ENCODE measurements at regions of chr3 and their contacts with region 1.

Region 1: GRCh38 chr3:171277456-171278298 is 182.5 kb downstream of the TNIK start:
- DNase-seq: no peak
- H3K4me3 ChIP-seq: no peak overlapping the region
- H3K4me3 Mint-ChIP-seq: no peak overlapping the region
- H3K27ac ChIP-seq: no peak overlapping the region
- H3K27ac Mint-ChIP-seq: peak overlapping the region in 3 of 7 donors; percentile 3 to 48 (median 23)
- H3K4me1 ChIP-seq: peaks cover 61% of the 10 kb centered on the region
- H3K4me1 Mint-ChIP-seq: peaks cover 38 to 73% (median 56%) of the 10 kb centered on the region in 4 donors
- H3K27me3 ChIP-seq: no peaks in the 10 kb centered on the region
- H3K27me3 Mint-ChIP-seq: no peaks in the 10 kb centered on the region

Region 2: GRCh38 chr3:171187706-171188290 is 89.9 kb before region 1 on chr3:
- CTCF ChIA-PET with region 1: interaction called, 3 read pairs
- POLR2A ChIA-PET with region 1: no interaction called
- intact Hi-C with region 1: loop called (anchors 1 kb)
- DNase-seq: peak; percentile 25 to 37 (median 31)
- H3K4me3 ChIP-seq: no peak overlapping the region
- H3K4me3 Mint-ChIP-seq: no peak overlapping the region
- H3K27ac ChIP-seq: no peak overlapping the region
- H3K27ac Mint-ChIP-seq: no peak overlapping the region
- H3K4me1 ChIP-seq: peaks cover 21% of the 10 kb centered on the region
- H3K4me1 Mint-ChIP-seq: peaks cover 28 to 34% (median 31%) of the 10 kb centered on the region in 4 donors
- H3K27me3 ChIP-seq: no peaks in the 10 kb centered on the region
- H3K27me3 Mint-ChIP-seq: no peaks in the 10 kb centered on the region

Region 3: GRCh38 chr3:171257251-171258203 is 20.1 kb before region 1 on chr3:
- CTCF ChIA-PET with region 1: interaction called, 3 read pairs
- POLR2A ChIA-PET with region 1: interaction called, 6 read pairs
- intact Hi-C with region 1: loop called (anchors 2 kb)
- DNase-seq: peak in 2 of 5 donors; percentile 31 to 33
- H3K4me3 ChIP-seq: peak overlapping the region in 1 of 2 donors; percentile 9
- H3K4me3 Mint-ChIP-seq: peak overlapping the region in 7 of 8 donors; percentile 32 to 87 (median 52)
- H3K27ac ChIP-seq: peak overlapping the region; percentile 68
- H3K27ac Mint-ChIP-seq: peak overlapping the region in 6 of 7 donors; percentile 90 to 97 (median 96)
- H3K4me1 ChIP-seq: peaks cover 99% of the 10 kb centered on the region
- H3K4me1 Mint-ChIP-seq: peaks cover 80 to 97% (median 88%) of the 10 kb centered on the region in 4 donors
- H3K27me3 ChIP-seq: no peaks in the 10 kb centered on the region
- H3K27me3 Mint-ChIP-seq: no peaks in the 10 kb centered on the region

Region 4: DNA sequence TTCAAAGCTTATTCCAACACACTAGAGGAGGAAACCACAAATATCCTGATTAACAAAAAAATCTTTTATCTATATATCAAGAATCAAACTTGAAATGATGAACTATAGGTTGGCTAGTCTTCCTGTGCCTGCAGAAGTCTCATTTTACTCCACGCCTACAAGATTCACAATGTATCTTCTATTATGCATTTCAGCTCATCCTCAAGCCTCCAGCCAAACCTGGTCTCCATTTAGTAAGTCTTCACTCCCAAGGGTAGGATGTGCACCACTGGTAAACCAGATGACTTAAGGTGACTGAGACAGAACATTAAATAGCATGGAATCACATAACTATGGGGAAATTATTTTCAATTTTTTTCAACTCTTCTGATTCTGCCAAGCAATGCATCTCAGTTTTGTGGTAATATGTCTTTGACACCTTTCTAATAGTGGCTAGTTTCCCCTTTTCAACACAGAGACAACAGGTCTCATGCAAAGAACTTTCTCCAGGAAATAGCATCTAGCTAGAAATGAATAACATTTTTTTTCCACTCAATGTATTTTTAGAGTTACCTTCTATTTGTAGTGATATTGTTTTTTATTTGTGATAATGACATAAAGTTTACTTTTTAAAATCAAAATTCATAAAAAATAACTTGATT is 15.6 kb after region 1 on chr3:
- CTCF ChIA-PET with region 1: interaction called, 3 read pairs
- POLR2A ChIA-PET with region 1: no interaction called
- intact Hi-C with region 1: loop called (anchors 2 kb)
- DNase-seq: no peak
- H3K4me3 ChIP-seq: no peak overlapping the region
- H3K4me3 Mint-ChIP-seq: peak overlapping the region in 7 of 8 donors; percentile 18 to 78 (median 64)
- H3K27ac ChIP-seq: no peak overlapping the region
- H3K27ac Mint-ChIP-seq: peak overlapping the region in 6 of 7 donors; percentile 36 to 82 (median 70)
- H3K4me1 ChIP-seq: peaks cover 48% of the 10 kb centered on the region
- H3K4me1 Mint-ChIP-seq: peaks cover 47 to 72% (median 59%) of the 10 kb centered on the region in 4 donors
- H3K27me3 ChIP-seq: no peaks in the 10 kb centered on the region
- H3K27me3 Mint-ChIP-seq: no peaks in the 10 kb centered on the region

Region 5: DNA sequence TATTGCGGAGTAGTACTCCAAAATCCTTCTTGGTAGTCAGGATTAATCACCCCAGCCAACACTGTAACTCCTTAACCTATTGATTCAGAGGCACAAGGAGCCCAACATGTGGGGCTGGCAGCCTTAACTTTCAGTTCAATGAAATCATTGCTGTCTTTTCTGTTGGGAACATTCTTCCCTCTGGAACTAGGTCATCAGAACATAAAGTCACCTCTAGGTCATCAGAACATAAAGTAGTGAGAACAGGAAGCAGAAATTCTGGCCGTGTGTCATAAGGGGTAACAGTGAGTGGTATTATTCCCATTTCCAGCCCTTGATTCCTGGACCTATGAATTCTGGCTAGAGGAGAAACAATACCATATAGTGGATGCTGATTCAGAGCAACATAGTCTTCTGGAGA is 254.0 kb after region 1 on chr3:
- CTCF ChIA-PET with region 1: no interaction called
- POLR2A ChIA-PET with region 1: no interaction called
- intact Hi-C with region 1: no loop called
- DNase-seq: no peak
- H3K4me3 ChIP-seq: no peak overlapping the region
- H3K4me3 Mint-ChIP-seq: no peak overlapping the region
- H3K27ac ChIP-seq: no peak overlapping the region
- H3K27ac Mint-ChIP-seq: peak overlapping the region in 1 of 7 donors; percentile 3
- H3K4me1 ChIP-seq: no peaks in the 10 kb centered on the region
- H3K4me1 Mint-ChIP-seq: no peaks in the 10 kb centered on the region
- H3K27me3 ChIP-seq: no peaks in the 10 kb centered on the region
- H3K27me3 Mint-ChIP-seq: peaks cover 0 to 2% of the 10 kb centered on the region in 2 donors